Naive thymus-derived CD4-positive, alpha-beta T cell (primary cell): ENCODE measurements at regions of chr10 and their contacts with region 1.

Region 1: GRCh38 chr10:35336084-35336831 is at the start of gene CCNY:
- DNase-seq: peak; percentile 65 to 81 (median 77)
- ATAC-seq: peak; percentile 91
- H3K4me3 ChIP-seq: peak within 1 kb of the TSS; percentile 82
- H3K4me3 Mint-ChIP-seq: peak within 1 kb of the TSS; percentile 85 to 96 (median 90)
- H3K27ac ChIP-seq: peak within 1 kb of the TSS; percentile 92
- H3K27ac Mint-ChIP-seq: peak within 1 kb of the TSS; percentile 81 to 94 (median 90)
- H3K4me1 ChIP-seq: peaks cover 35 to 39% of the 10 kb centered on the region in 2 donors
- H3K4me1 Mint-ChIP-seq: peaks cover 58 to 81% (median 76%) of the 10 kb centered on the region in 7 donors
- H3K27me3 ChIP-seq: no peaks in the 10 kb centered on the region
- H3K27me3 Mint-ChIP-seq: no peaks in the 10 kb centered on the region
- total RNA-seq, gene CCNY: 52.3 to 91.9 (median 68.3) TPM

Region 2: GRCh38 chr10:34994565-34995142 is 341.6 kb before region 1 on chr10:
- CTCF ChIA-PET with region 1: no interaction called
- POLR2A ChIA-PET with region 1: no interaction called
- intact Hi-C with region 1: loop called in 1 of 2 experiments (anchors 10 kb)
- DNase-seq: peak in 8 of 9 donors; percentile 18 to 78 (median 50)
- ATAC-seq: peak; percentile 71
- H3K4me3 ChIP-seq: no peak overlapping the region
- H3K4me3 Mint-ChIP-seq: no peak overlapping the region
- H3K27ac ChIP-seq: no peak overlapping the region
- H3K27ac Mint-ChIP-seq: peak overlapping the region in 6 of 9 donors; percentile 28 to 83 (median 56)
- H3K4me1 ChIP-seq: peaks cover 0 to 8% of the 10 kb centered on the region in 2 donors
- H3K4me1 Mint-ChIP-seq: peaks cover 0 to 17% (median 10%) of the 10 kb centered on the region in 7 donors
- H3K27me3 ChIP-seq: no peaks in the 10 kb centered on the region
- H3K27me3 Mint-ChIP-seq: no peaks in the 10 kb centered on the region

Region 3: GRCh38 chr10:35126530-35127296 is 209.5 kb before region 1 on chr10 and contains the start of gene CREM:
- CTCF ChIA-PET with region 1: no interaction called
- POLR2A ChIA-PET with region 1: no interaction called
- intact Hi-C with region 1: loop called (anchors 1 kb)
- DNase-seq: peak; percentile 98 to 100 (median 99)
- ATAC-seq: peak; percentile 90
- H3K4me3 ChIP-seq: peak within 1 kb of the TSS; percentile 84
- H3K4me3 Mint-ChIP-seq: peak within 1 kb of the TSS; percentile 63 to 93 (median 91)
- H3K27ac ChIP-seq: peak within 1 kb of the TSS; percentile 100
- H3K27ac Mint-ChIP-seq: peak within 1 kb of the TSS; percentile 85 to 99 (median 95)
- H3K4me1 ChIP-seq: peaks cover 17 to 20% of the 10 kb centered on the region in 2 donors
- H3K4me1 Mint-ChIP-seq: peaks cover 16 to 61% (median 47%) of the 10 kb centered on the region in 7 donors
- H3K27me3 ChIP-seq: no peaks in the 10 kb centered on the region
- H3K27me3 Mint-ChIP-seq: no peaks in the 10 kb centered on the region
- total RNA-seq, gene CREM: 13.3 to 76.2 (median 31.6) TPM

Region 4: GRCh38 chr10:35236739-35237138 is 99.5 kb before region 1 on chr10:
- CTCF ChIA-PET with region 1: no interaction called
- POLR2A ChIA-PET with region 1: no interaction called
- intact Hi-C with region 1: loop called in 1 of 2 experiments (anchors 5 kb)
- DNase-seq: no peak
- ATAC-seq: no peak
- H3K4me3 ChIP-seq: no peak overlapping the region
- H3K4me3 Mint-ChIP-seq: no peak overlapping the region
- H3K27ac ChIP-seq: no peak overlapping the region
- H3K27ac Mint-ChIP-seq: no peak overlapping the region
- H3K4me1 ChIP-seq: no peaks in the 10 kb centered on the region
- H3K4me1 Mint-ChIP-seq: peaks cover 0 to 2% (median 0%) of the 10 kb centered on the region in 7 donors
- H3K27me3 ChIP-seq: no peaks in the 10 kb centered on the region
- H3K27me3 Mint-ChIP-seq: no peaks in the 10 kb centered on the region

Region 5: DNA sequence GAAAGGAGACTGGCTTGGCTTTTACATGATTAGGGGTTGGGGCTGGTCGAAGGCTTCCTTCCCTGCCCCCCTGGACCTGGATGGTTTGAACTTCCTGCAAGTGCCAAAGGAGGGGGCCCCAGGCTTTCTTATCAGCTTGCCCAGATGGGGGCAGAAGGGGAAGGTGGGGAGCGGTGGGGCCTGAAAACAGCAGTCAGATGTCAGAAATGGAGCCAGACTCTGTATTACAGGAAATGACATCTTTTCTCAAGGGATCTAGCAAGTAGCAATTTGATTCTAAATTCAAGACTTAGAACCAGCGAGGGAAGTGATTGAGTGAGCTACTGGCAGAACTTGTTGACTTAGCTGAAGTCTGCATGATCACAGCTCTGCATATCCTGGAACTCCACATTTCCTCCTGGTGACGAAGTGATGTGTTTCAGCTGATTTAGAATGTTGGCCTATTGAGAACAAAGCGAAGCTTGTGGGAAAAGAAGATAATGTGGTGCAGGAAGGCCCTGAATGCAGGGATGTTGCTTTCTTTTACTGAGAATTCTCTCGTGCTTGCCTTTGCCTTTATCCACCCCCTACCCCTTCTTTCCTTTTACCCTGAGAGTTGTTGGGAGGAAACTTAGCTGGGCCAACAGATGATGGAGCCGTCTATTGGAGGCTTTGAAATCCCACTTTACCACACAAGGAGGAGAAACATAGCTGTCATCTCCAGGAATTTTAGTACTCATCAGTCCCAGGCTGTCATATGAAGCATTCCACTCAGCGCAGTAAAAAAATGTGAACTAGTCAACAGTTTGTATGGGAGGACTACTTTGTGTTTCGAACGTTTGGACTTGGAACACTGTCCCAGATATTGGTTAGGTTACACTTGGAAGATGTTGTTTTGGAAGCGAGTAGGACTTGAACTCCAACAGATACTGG is 43.2 kb after region 1 on chr10:
- CTCF ChIA-PET with region 1: no interaction called
- POLR2A ChIA-PET with region 1: no interaction called
- intact Hi-C with region 1: loop called (anchors 2 kb)
- DNase-seq: peak in 7 of 9 donors; percentile 16 to 56 (median 34)
- ATAC-seq: peak; percentile 73
- H3K4me3 ChIP-seq: no peak overlapping the region
- H3K4me3 Mint-ChIP-seq: peak overlapping the region; percentile 18 to 74 (median 58)
- H3K27ac ChIP-seq: peak overlapping the region; percentile 12
- H3K27ac Mint-ChIP-seq: peak overlapping the region; percentile 41 to 90 (median 75)
- H3K4me1 ChIP-seq: peaks cover 9 to 26% of the 10 kb centered on the region in 2 donors
- H3K4me1 Mint-ChIP-seq: peaks cover 40 to 92% (median 77%) of the 10 kb centered on the region in 7 donors
- H3K27me3 ChIP-seq: no peaks in the 10 kb centered on the region
- H3K27me3 Mint-ChIP-seq: no peaks in the 10 kb centered on the region

Region 6: GRCh38 chr10:35563261-35563891 is 227.1 kb after region 1 on chr10:
- CTCF ChIA-PET with region 1: no interaction called
- POLR2A ChIA-PET with region 1: no interaction called
- intact Hi-C with region 1: loop called (anchors 1 to 10 kb)
- DNase-seq: peak in 6 of 9 donors; percentile 25 to 40 (median 34)
- ATAC-seq: peak; percentile 67
- H3K4me3 ChIP-seq: no peak overlapping the region
- H3K4me3 Mint-ChIP-seq: no peak overlapping the region
- H3K27ac ChIP-seq: no peak overlapping the region
- H3K27ac Mint-ChIP-seq: peak overlapping the region in 4 of 9 donors; percentile 4 to 72 (median 30)
- H3K4me1 ChIP-seq: no peaks in the 10 kb centered on the region
- H3K4me1 Mint-ChIP-seq: peaks cover 0 to 16% (median 5%) of the 10 kb centered on the region in 7 donors
- H3K27me3 ChIP-seq: no peaks in the 10 kb centered on the region
- H3K27me3 Mint-ChIP-seq: no peaks in the 10 kb centered on the region